Activated CD4-positive, alpha-beta T cell treated with anti-CD3 and anti-CD28 coated beads for 36 hours (primary cell): ENCODE measurements at regions of chr1 and their contacts with region 1.

Region 1: GRCh38 chr1:160837558-160838205 is 25.0 kb downstream of the CD244 start:
- DNase-seq: peak; percentile 87
- ATAC-seq: peak; percentile 93
- H3K4me3 Mint-ChIP-seq: peak overlapping the region; percentile 42
- H3K27ac Mint-ChIP-seq: peak overlapping the region; percentile 91
- H3K4me1 Mint-ChIP-seq: peaks cover 55% of the 10 kb centered on the region
- H3K27me3 Mint-ChIP-seq: no peaks in the 10 kb centered on the region

Region 2: DNA sequence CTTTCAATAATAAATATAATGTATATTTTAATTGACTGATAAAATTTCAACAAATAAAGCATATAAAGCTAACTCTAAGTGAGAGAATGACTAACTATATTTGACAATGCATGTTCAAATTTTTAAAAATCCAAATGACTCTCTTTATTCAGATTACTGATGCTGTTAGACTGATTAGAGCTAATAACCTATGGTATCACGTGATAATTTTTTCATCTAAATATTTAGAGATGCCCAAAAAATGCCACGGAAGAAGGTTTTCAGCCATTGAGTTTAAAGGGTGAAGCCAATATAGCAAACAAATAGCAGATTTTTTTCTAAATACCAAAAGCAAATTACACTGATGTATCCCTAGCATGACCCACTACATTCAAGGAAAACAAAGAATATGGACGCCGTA is 1466.8 kb before region 1 on chr1:
- CTCF ChIA-PET with region 1: no interaction called
- POLR2A ChIA-PET with region 1: no interaction called
- intact Hi-C with region 1: no loop called
- DNase-seq: no peak
- ATAC-seq: no peak
- H3K4me3 Mint-ChIP-seq: no peak overlapping the region
- H3K27ac Mint-ChIP-seq: no peak overlapping the region
- H3K4me1 Mint-ChIP-seq: no peaks in the 10 kb centered on the region
- H3K27me3 Mint-ChIP-seq: peaks cover 10% of the 10 kb centered on the region

Region 3: DNA sequence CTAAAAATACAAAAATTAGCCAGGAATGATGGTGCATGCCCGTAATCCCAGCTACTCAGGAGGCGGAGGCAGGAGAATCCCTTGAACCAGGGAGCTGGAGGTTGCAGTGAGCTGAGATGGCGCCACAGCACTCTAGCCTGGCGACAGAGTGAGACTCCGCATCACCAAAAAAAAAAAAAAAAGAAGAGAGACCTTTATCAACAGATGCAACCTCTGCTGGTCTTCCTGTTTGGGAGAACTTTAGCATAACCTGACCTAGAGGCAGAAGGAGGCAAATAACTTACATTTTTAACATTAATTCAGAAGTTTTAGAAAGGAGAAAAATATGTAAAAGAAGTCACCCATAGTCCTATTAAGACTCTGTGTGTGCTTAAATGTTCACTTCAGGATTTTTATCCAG is 223.3 kb before region 1 on chr1:
- CTCF ChIA-PET with region 1: no interaction called
- POLR2A ChIA-PET with region 1: no interaction called
- intact Hi-C with region 1: no loop called
- DNase-seq: no peak
- ATAC-seq: no peak
- H3K4me3 Mint-ChIP-seq: no peak overlapping the region
- H3K27ac Mint-ChIP-seq: no peak overlapping the region
- H3K4me1 Mint-ChIP-seq: peaks cover 42% of the 10 kb centered on the region
- H3K27me3 Mint-ChIP-seq: no peaks in the 10 kb centered on the region

Region 4: DNA sequence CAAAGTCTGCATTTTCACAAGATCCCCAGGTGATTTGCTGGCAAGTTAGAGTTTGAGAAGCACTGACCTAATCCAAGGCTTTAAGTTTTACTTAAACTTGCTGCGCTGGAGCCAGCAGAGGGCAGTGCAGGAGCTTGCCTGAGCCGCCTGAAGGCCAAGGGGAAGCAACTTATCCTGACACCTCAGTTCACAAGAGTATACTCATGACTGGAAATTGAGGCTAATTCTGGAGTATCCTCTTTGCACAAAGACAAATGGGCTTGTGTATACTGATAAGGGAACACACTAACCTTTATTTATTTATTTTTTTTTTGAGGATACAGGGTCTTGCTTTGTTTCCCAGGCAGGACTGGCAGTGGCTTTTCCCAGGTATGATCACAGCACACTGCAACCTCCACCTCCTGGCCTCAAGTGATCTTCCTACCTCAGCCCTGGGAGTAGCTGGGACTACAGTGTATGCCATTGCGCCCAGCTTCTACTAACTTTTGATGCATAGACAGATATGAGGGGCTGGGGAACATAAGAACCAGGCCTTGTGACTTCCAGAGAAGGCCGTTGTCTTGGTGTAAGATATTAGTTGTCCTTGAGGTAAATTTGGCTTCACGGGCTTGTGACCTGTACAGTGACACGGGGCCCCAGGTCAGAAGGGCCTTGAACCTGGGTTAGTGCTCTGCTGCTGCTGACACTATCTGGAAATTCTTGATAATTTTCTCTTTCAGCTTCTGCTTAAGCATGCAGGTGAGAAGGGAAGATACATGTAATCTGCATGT is 161.9 kb before region 1 on chr1:
- CTCF ChIA-PET with region 1: interaction called, 33 read pairs
- POLR2A ChIA-PET with region 1: interaction called, 3 read pairs
- intact Hi-C with region 1: loop called in 1 of 2 experiments (anchors 1 kb)
- DNase-seq: peak; percentile 89
- ATAC-seq: peak; percentile 70
- H3K4me3 Mint-ChIP-seq: peak overlapping the region; percentile 26
- H3K27ac Mint-ChIP-seq: peak overlapping the region; percentile 48
- H3K4me1 Mint-ChIP-seq: peaks cover 42% of the 10 kb centered on the region
- H3K27me3 Mint-ChIP-seq: no peaks in the 10 kb centered on the region

Region 5: GRCh38 chr1:160768295-160768657 is 69.4 kb before region 1 on chr1:
- CTCF ChIA-PET with region 1: interaction called, 130 read pairs
- POLR2A ChIA-PET with region 1: no interaction called
- intact Hi-C with region 1: no loop called
- DNase-seq: peak; percentile 93
- ATAC-seq: peak; percentile 77
- H3K4me3 Mint-ChIP-seq: peak overlapping the region; percentile 75
- H3K27ac Mint-ChIP-seq: peak overlapping the region; percentile 99
- H3K4me1 Mint-ChIP-seq: peaks cover 44% of the 10 kb centered on the region
- H3K27me3 Mint-ChIP-seq: no peaks in the 10 kb centered on the region

Region 6: GRCh38 chr1:160821628-160822027 is 16.1 kb before region 1 on chr1:
- CTCF ChIA-PET with region 1: interaction called, 24 read pairs
- POLR2A ChIA-PET with region 1: no interaction called
- intact Hi-C with region 1: no loop called
- DNase-seq: peak; percentile 35
- ATAC-seq: no peak
- H3K4me3 Mint-ChIP-seq: no peak overlapping the region
- H3K27ac Mint-ChIP-seq: no peak overlapping the region
- H3K4me1 Mint-ChIP-seq: no peaks in the 10 kb centered on the region
- H3K27me3 Mint-ChIP-seq: no peaks in the 10 kb centered on the region

Region 7: GRCh38 chr1:160884579-160884978 is 46.9 kb after region 1 on chr1:
- CTCF ChIA-PET with region 1: interaction called, 79 read pairs
- POLR2A ChIA-PET with region 1: interaction called, 4 read pairs
- intact Hi-C with region 1: loop called (anchors 1 to 2 kb)
- DNase-seq: peak; percentile 55
- ATAC-seq: peak; percentile 94
- H3K4me3 Mint-ChIP-seq: no peak overlapping the region
- H3K27ac Mint-ChIP-seq: no peak overlapping the region
- H3K4me1 Mint-ChIP-seq: peaks cover 10% of the 10 kb centered on the region
- H3K27me3 Mint-ChIP-seq: peaks cover 2% of the 10 kb centered on the region

Region 8: GRCh38 chr1:161098210-161099068 is 260.8 kb after region 1 on chr1 and contains the start of gene KLHDC9:
- CTCF ChIA-PET with region 1: interaction called, 3 read pairs
- POLR2A ChIA-PET with region 1: no interaction called
- intact Hi-C with region 1: loop called (anchors 5 kb)
- DNase-seq: peak; percentile 84
- ATAC-seq: peak; percentile 82
- H3K4me3 Mint-ChIP-seq: peak within 1 kb of the TSS; percentile 71
- H3K27ac Mint-ChIP-seq: peak within 1 kb of the TSS; percentile 73
- H3K4me1 Mint-ChIP-seq: peaks cover 34% of the 10 kb centered on the region
- H3K27me3 Mint-ChIP-seq: no peaks in the 10 kb centered on the region
- total RNA-seq, gene KLHDC9: 0.39 to 0.50 TPM